ENCODE measurements at regions of chr14 and their contacts with region 1.

Region 1: GRCh38 chr14:103546652-103547454 is 15.6 kb downstream of the BAG5 start:
- DNase-seq: peak; percentile 76
- ATAC-seq: peak; percentile 90
- H3K4me3 Mint-ChIP-seq: no peak overlapping the region
- H3K27ac Mint-ChIP-seq: no peak overlapping the region
- H3K4me1 Mint-ChIP-seq: peaks cover 2% of the 10 kb centered on the region
- H3K27me3 Mint-ChIP-seq: no peaks in the 10 kb centered on the region
- CTCF ChIP-seq: peak; percentile 63

Region 2: GRCh38 chr14:103444837-103445524 is 101.9 kb before region 1 on chr14:
- CTCF ChIA-PET with region 1: no interaction called
- POLR2A ChIA-PET with region 1: interaction called, 11 read pairs
- intact Hi-C with region 1: no loop called
- DNase-seq: no peak
- ATAC-seq: no peak
- H3K4me3 Mint-ChIP-seq: no peak overlapping the region
- H3K27ac Mint-ChIP-seq: no peak overlapping the region
- H3K4me1 Mint-ChIP-seq: peaks cover 50% of the 10 kb centered on the region
- H3K27me3 Mint-ChIP-seq: no peaks in the 10 kb centered on the region
- CTCF ChIP-seq: no peak

Region 3: DNA sequence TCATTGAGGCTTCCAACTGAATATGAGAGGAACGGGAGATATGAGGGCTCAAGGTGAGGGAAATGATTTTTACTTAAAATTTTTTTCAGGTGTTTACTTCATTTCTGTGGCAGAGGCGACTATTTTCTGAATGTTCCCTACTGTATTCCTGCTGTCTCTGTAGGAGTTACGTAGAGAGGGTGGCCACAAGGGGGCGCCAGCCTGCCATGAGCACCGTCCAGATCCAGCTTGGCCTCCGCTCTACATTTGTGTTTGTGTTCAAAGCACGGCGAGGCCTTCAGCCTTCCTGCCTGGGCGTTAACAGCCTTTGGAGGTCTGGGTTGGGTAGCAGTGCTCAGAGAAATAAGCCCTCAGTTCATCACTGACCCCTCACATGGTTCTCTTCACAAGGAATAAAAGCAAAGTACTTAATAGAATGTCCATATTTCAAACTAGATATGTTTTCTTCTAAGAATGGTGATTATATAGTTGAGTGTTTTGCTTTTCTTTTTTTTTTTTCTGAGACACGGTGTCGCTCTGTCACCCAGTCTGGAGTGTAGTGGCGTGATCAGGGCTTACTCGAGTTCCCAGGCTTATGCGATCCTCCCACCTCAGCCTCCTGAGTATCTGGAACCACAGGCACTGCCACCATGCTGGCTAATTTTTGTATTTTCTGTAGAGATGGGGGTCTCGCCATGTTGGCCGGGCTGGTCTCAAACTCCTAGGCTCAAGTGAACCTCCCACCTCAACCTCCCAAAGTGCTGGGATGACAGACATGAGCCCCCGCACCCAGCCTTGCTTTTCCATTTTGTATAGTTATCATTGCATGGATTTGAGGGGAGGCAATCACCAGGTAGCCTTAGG is 46.5 kb before region 1 on chr14:
- CTCF ChIA-PET with region 1: interaction called, 5 read pairs
- POLR2A ChIA-PET with region 1: no interaction called
- intact Hi-C with region 1: loop called (anchors 1 kb)
- DNase-seq: peak; percentile 60
- ATAC-seq: peak; percentile 82
- H3K4me3 Mint-ChIP-seq: no peak overlapping the region
- H3K27ac Mint-ChIP-seq: no peak overlapping the region
- H3K4me1 Mint-ChIP-seq: peaks cover 8% of the 10 kb centered on the region
- H3K27me3 Mint-ChIP-seq: no peaks in the 10 kb centered on the region
- CTCF ChIP-seq: peak; percentile 49

Region 4: DNA sequence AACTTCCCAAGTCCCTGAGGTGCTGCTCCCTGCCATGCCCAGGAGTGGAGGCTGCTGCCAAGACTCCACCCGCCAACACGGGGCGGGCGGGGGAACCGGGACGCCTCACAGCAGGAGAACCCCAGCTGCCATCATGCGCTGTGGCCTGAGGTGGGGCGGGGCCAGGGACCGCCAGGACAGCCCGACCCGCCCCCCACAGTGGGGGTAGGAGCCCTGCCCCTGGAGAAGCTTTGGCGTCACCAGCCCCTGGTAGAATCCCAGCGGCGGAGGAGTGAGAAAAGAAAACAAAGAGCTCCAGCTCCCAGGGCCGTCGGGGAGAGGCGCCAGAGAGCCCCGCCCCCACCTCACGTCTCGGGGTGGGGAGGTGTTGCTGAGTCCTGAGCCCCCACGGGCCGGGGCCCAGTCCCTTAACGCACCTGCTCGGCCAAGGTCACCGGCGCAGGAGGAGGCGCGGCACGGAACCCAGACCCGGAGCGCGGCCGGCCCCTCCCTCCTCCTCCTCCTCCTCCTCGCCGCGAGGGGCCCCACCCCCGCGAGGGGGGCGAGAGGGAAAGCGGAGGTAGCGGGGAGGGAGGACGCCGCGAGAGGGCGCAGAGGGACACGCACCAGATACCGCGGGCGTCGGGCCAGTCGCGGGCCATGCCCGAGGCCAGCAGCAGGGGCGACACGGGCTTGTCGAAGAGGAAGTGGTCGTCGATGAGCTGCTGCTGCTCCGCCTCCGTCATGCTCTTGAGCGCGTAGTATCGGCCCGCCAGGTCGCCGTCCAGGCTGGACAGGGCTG is 26.0 kb before region 1 on chr14:
- CTCF ChIA-PET with region 1: interaction called, 70 read pairs
- POLR2A ChIA-PET with region 1: interaction called, 4 read pairs
- intact Hi-C with region 1: loop called (anchors 1 kb)
- DNase-seq: peak; percentile 75
- ATAC-seq: peak; percentile 78
- H3K4me3 Mint-ChIP-seq: peak overlapping the region; percentile 70
- H3K27ac Mint-ChIP-seq: no peak overlapping the region
- H3K4me1 Mint-ChIP-seq: peaks cover 23% of the 10 kb centered on the region
- H3K27me3 Mint-ChIP-seq: no peaks in the 10 kb centered on the region
- CTCF ChIP-seq: no peak